Prostate gland (tissue), 2 donors: ENCODE measurements at regions of chr9 and their contacts with region 1.

Region 1: GRCh38 chr9:81499021-81499454 is 190.3 kb downstream of the TLE1 start:
- DNase-seq: peak; percentile 50
- H3K4me3 ChIP-seq: no peak overlapping the region
- H3K27ac ChIP-seq: peak overlapping the region; percentile 57 to 63
- H3K4me1 ChIP-seq: no peaks in the 10 kb centered on the region
- H3K27me3 ChIP-seq: no peaks in the 10 kb centered on the region
- CTCF ChIP-seq: no peak
- POLR2A ChIP-seq: no peak

Region 2: GRCh38 chr9:81535542-81536241 is 36.7 kb after region 1 on chr9:
- intact Hi-C with region 1: no loop called
- DNase-seq: no peak
- H3K4me3 ChIP-seq: no peak overlapping the region
- H3K27ac ChIP-seq: no peak overlapping the region
- H3K4me1 ChIP-seq: peaks cover 6% of the 10 kb centered on the region
- H3K27me3 ChIP-seq: no peaks in the 10 kb centered on the region
- CTCF ChIP-seq: no peak
- POLR2A ChIP-seq: no peak

Region 3: DNA sequence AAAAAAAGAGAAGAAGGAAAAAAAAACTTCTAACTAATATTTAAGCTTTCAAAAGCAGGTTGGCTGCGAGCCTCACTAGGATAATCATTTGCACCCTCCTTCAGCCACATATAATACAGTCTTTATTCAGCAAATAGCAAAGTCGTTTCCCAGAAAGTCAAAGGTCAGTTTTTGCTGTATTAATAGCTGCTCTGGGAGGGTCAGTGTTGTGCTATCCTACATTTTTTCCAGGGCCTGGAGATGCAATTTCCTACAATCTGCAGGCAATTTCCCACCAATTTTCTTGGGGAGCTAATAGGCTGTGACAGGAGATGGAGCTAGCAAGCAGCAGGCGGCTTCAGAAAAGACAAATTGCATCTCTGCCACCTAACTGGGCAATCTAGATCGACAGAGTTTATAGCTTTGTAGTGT is 53.5 kb after region 1 on chr9:
- intact Hi-C with region 1: no loop called
- DNase-seq: no peak
- H3K4me3 ChIP-seq: no peak overlapping the region
- H3K27ac ChIP-seq: no peak overlapping the region
- H3K4me1 ChIP-seq: no peaks in the 10 kb centered on the region
- H3K27me3 ChIP-seq: no peaks in the 10 kb centered on the region
- CTCF ChIP-seq: no peak
- POLR2A ChIP-seq: no peak

Region 4: GRCh38 chr9:81581986-81582385 is 82.9 kb after region 1 on chr9:
- intact Hi-C with region 1: loop called (anchors 5 kb)
- DNase-seq: no peak
- H3K4me3 ChIP-seq: no peak overlapping the region
- H3K27ac ChIP-seq: no peak overlapping the region
- H3K4me1 ChIP-seq: no peaks in the 10 kb centered on the region
- H3K27me3 ChIP-seq: no peaks in the 10 kb centered on the region
- CTCF ChIP-seq: no peak
- POLR2A ChIP-seq: no peak